Activated naive CD8-positive, alpha-beta T cell treated with anti-CD3 and anti-CD28 coated beads, Interleukin-2, amount 10 ng/mL, durations not matched to agents 7 days and 5 days (primary cell): ENCODE measurements at regions of chr9 and their contacts with region 1.

Region 1: GRCh38 chr9:15306757-15307534 is at the start of gene TTC39B:
- DNase-seq: peak; percentile 89
- ATAC-seq: peak; percentile 89
- H3K4me3 Mint-ChIP-seq: peak within 1 kb of the TSS; percentile 99
- H3K27ac Mint-ChIP-seq: peak within 1 kb of the TSS; percentile 99
- H3K4me1 Mint-ChIP-seq: peaks cover 46% of the 10 kb centered on the region
- H3K27me3 Mint-ChIP-seq: no peaks in the 10 kb centered on the region
- total RNA-seq, gene TTC39B: 33.6 to 35.2 TPM

Region 2: GRCh38 chr9:15277400-15278090 is 29.4 kb before region 1 on chr9:
- POLR2A ChIA-PET with region 1: no interaction called
- DNase-seq: no peak
- ATAC-seq: no peak
- H3K4me3 Mint-ChIP-seq: no peak overlapping the region
- H3K27ac Mint-ChIP-seq: no peak overlapping the region
- H3K4me1 Mint-ChIP-seq: peaks cover 7% of the 10 kb centered on the region
- H3K27me3 Mint-ChIP-seq: no peaks in the 10 kb centered on the region

Region 3: DNA sequence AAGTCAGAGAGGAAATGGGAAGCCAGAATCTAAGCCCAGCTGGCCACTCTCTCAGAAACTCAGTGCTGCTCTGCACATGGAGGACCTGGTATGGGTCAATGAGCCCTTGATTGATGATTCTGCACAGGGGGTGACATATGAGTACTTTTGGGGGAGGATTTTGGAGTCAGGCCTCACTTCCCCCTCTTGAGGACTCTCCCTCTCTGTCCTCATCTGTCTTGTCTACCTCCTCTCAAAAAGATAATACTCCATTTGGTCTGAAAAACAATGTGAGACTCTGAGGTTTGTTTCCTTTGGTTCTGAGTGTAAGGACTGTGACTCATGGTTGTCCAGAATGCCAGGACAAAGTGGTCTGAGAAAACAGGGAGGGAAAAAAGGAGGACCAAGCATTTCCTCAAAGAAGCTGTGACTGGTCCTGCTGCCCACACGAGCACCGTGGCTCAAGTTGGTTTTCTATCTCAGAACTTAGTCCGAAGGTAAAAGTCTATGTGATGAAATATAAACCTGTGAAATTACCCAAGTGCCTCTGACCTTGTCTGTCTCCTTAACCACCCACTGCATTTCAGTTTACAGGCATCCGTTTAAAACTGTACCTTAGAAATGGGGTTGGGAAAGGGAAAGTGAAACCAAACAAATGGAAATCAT is 11.1 kb before region 1 on chr9:
- POLR2A ChIA-PET with region 1: interaction called, 79 read pairs
- DNase-seq: peak; percentile 34
- ATAC-seq: peak; percentile 32
- H3K4me3 Mint-ChIP-seq: peak overlapping the region; percentile 79
- H3K27ac Mint-ChIP-seq: peak overlapping the region; percentile 98
- H3K4me1 Mint-ChIP-seq: peaks cover 69% of the 10 kb centered on the region
- H3K27me3 Mint-ChIP-seq: no peaks in the 10 kb centered on the region